H1 (cell line): ENCODE measurements at regions of chr17 and their contacts with region 1.

Region 1: DNA sequence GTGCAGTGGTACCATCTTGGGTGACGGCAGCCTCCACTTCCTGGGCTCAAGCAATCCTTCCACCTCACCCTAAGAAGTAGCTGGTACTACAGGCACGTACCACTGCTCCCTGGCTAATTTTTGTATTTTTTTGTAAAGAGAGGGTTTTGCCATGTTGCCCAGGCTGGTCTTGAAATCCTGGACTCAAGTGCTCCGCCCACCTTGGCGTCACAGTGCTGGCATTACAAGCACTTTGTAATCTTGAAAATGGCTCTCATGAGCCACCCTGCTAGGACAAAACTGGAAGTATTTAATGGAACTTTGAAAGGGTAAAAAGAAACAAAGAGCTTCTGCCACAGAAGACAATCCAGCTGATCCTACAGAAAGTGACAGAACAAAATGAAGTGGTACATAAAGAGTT is 9.2 kb downstream of the SUMO2 start:
- DNase-seq: no peak
- H3K4me3 ChIP-seq: no peak overlapping the region
- H3K27ac ChIP-seq: no peak overlapping the region; the same call in 1 of the 2 replicates
- H3K4me1 ChIP-seq: no peaks in the 10 kb centered on the region; a peak in 1 of 7 replicates
- H3K27me3 ChIP-seq: no peaks in the 10 kb centered on the region
- CTCF ChIP-seq: no peak
- EP300 ChIP-seq: no peak
- POLR2A ChIP-seq: no peak
- RAD21 ChIP-seq: no peak

Region 2: GRCh38 chr17:75124041-75124818 is 49.3 kb before region 1 on chr17:
- CTCF ChIA-PET with region 1: interaction called, 10 read pairs
- POLR2A ChIA-PET with region 1: no interaction called
- DNase-seq: no peak
- H3K4me3 ChIP-seq: no peak overlapping the region
- H3K27ac ChIP-seq: no peak overlapping the region; the same call in 1 of the 2 replicates
- H3K4me1 ChIP-seq: peaks cover 0 to 2% (median under 1%) of the 10 kb centered on the region in 4 experiments; a peak in 1 of 7 replicates
- H3K27me3 ChIP-seq: no peaks in the 10 kb centered on the region; a peak in 1 of 7 replicates
- CTCF ChIP-seq: no peak
- EP300 ChIP-seq: no peak
- POLR2A ChIP-seq: no peak
- RAD21 ChIP-seq: no peak

Region 3: GRCh38 chr17:75142239-75142971 is 31.1 kb before region 1 on chr17:
- CTCF ChIA-PET with region 1: interaction called, 11 read pairs
- POLR2A ChIA-PET with region 1: interaction called, 13 read pairs
- DNase-seq: no peak
- H3K4me3 ChIP-seq: no peak overlapping the region
- H3K27ac ChIP-seq: no peak overlapping the region
- H3K4me1 ChIP-seq: no peaks in the 10 kb centered on the region
- H3K27me3 ChIP-seq: no peaks in the 10 kb centered on the region
- CTCF ChIP-seq: no peak
- EP300 ChIP-seq: no peak
- POLR2A ChIP-seq: no peak
- RAD21 ChIP-seq: no peak

Region 4: DNA sequence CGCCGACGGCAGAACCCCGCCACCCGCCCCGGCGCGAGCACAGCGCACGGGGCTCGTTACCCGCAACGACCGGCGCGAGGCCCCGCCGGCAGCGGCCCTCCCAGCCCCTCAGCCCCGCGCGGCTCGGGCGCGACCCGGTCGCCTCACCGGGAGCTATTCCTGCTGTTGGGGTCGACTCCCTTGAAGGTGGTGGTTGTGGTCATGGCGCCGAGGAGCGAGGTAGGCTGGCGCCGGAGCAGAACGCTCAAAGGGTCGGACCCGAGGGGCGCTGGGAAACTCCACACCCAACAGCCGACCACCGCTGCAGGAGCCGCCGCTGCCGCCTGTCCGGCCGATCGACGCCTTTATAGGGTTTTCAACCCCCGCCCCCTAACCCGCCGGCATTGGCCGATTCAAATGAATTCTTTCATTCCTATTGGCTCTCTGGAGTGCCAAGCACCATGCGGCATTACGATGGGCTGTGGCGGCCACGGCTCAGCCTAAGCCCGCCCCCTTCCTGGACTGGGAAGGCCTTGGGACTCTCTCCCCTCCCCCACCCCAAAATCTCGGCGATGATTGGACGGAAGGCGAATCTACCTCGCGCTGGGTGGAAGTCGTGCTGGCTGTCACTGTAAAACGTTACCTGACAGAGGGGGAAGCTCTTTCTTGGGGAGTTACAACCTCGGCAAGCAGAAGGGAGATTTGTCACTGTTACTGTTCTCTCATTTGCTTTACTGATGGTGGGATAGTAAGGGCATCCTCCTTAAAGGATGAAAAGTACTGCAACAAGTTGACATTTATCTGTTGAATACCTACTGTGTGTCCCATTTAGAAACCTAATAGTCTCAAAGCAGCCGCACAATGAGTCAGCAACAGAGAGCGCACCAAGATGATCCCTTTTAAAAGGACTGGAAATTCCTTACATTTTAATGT is 19.1 kb before region 1 on chr17 and contains the start of gene JPT1:
- CTCF ChIA-PET with region 1: interaction called, 19 read pairs
- POLR2A ChIA-PET with region 1: interaction called, 213 read pairs
- DNase-seq: peak; percentile 95 to 99
- H3K4me3 ChIP-seq: peak within 1 kb of the TSS; percentile 87 to 95 (median 94)
- H3K27ac ChIP-seq: peak within 1 kb of the TSS; percentile 53
- H3K4me1 ChIP-seq: peaks cover 3 to 12% (median 9%) of the 10 kb centered on the region in 4 experiments; a peak in 6 of 7 replicates
- H3K27me3 ChIP-seq: no peaks in the 10 kb centered on the region
- CTCF ChIP-seq: no peak
- EP300 ChIP-seq: no peak
- POLR2A ChIP-seq: peak; percentile 100
- RAD21 ChIP-seq: no peak
- total RNA-seq, gene JPT1: 340 and 369 TPM in 2 replicates

Region 5: GRCh38 chr17:75205037-75205792 is 31.7 kb after region 1 on chr17 and contains the start of gene NUP85:
- CTCF ChIA-PET with region 1: interaction called, 13 read pairs
- POLR2A ChIA-PET with region 1: interaction called, 7 read pairs
- DNase-seq: peak; percentile 73 to 96
- H3K4me3 ChIP-seq: peak within 1 kb of the TSS; percentile 76 to 98 (median 92)
- H3K27ac ChIP-seq: peak within 1 kb of the TSS; percentile 99
- H3K4me1 ChIP-seq: peaks cover 0 to 2% (median 0%) of the 10 kb centered on the region in 4 experiments; a peak in 2 of 7 replicates
- H3K27me3 ChIP-seq: no peaks in the 10 kb centered on the region
- CTCF ChIP-seq: no peak
- EP300 ChIP-seq: no peak
- POLR2A ChIP-seq: peak in 1 of 2 experiments; percentile 79; a peak in 2 of 3 replicates
- RAD21 ChIP-seq: no peak
- total RNA-seq, gene NUP85: 97.4 and 98.5 TPM in 2 replicates

Region 6: DNA sequence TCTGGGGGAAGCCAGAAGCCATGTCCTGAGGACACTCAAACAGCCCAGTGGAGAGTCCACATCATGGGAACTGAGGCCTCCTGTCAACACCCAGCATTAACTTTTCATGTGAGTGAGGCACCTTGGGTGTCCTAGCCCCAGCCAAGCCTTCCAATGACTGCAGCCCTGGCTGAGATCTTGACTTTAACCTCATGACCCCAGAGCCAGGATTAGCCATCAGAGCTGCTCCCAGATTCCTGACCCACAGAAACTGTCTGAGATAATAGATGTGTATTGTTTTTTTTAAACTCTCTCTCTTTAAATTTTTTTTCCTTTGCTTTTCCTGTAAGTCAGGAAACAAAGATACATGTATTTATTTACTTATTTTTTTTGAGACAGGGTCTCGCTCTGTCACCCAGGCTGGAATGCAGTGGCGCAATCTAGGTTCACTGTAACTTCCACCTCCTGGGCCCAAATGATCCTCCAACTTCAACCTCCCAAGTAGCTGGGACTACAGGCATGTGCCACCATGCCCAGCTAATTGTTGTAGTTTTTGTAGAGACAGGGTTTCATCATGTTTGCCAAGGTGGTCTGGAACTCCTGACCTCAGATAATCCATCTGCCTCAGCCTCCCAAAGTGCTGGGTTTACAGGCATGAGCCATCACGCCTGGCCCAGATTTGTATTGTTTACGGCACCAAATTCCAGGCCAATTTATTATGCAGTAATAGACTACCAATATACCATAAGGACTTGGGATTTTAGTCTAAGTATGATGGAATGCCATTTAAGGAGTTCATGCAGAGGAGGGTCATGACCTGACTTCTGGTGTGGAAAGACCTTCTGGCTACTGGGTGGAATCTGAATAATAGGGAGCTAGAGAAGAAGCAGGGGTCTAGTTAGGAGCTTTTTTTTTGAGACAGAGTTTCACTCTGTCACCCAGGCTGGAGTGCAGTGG is 268.9 kb after region 1 on chr17:
- CTCF ChIA-PET with region 1: no interaction called
- POLR2A ChIA-PET with region 1: no interaction called
- DNase-seq: no peak
- H3K4me3 ChIP-seq: no peak overlapping the region
- H3K27ac ChIP-seq: no peak overlapping the region
- H3K4me1 ChIP-seq: no peaks in the 10 kb centered on the region
- H3K27me3 ChIP-seq: no peaks in the 10 kb centered on the region
- CTCF ChIP-seq: no peak
- EP300 ChIP-seq: no peak
- POLR2A ChIP-seq: no peak
- RAD21 ChIP-seq: no peak